Posterior vena cava (tissue), 2 donors: ENCODE measurements at regions of chr4 and their contacts with region 1.

Region 1: GRCh38 chr4:137754652-137755471 is 222.6 kb upstream of the PCDH18 start:
- DNase-seq: no peak

Region 2: DNA sequence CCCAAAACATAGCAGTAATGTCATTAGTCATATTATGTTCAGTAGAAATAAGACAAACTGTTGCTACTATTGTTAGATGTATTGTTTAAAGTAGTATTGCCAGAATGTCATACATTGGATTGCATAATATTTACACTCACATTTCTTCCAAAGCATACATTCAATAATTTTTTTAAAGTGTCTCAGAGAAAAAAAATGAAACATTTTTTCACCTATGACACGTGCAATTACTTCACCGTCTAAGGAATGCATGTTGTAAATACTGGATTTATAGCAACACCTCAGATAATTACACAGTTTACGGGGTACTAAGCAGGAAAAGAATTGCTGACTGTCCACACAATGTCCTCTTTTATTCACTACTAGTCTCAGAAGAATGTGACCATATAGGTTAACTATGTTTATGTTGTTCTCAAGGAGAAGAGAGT is 384.6 kb before region 1 on chr4:
- intact Hi-C with region 1: no loop called
- DNase-seq: no peak

Region 3: GRCh38 chr4:137510557-137511265 is 244.2 kb before region 1 on chr4:
- intact Hi-C with region 1: no loop called
- DNase-seq: no peak

Region 4: DNA sequence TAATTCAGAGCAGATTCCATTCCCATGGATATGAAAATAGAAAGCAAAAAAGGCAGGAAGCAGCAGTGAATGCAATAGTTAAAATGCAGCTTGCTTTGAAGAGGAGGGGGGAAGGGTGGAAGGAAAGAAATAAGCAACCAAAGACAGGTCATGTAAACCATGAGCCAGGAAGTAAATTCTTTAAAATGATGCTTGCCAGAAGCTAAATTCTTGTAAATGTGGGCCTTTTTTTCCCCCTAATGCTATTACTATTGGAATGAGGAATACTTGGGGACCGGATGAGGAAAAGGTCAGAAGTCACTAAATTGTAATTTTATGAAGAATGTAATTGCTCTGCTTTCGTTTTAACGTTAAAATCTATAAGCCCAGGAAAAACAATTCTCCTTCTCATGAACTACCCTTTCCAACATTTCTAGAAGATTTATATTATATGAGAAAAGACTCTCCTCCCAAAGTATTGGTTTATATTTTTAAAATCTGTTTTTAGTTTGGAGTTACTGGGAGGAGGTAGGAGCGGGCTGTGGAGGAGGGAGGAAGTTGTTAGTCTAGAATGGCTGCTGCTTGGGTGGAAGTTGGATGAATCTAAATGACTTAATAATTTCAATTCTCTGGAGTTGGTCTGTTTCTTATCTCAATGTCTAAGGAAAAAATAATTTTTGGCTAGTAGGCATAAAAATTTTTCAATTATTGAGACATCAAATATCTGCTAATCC is 145.0 kb before region 1 on chr4:
- intact Hi-C with region 1: loop called in 1 of 2 experiments (anchors 2 kb)
- DNase-seq: no peak